ENCODE measurements at regions of chr1 and their contacts with region 1.

Region 1: GRCh38 chr1:21176586-21177555 is at the start of gene EIF4G3:
- DNase-seq: peak; percentile 99
- H3K4me3 ChIP-seq: peak within 1 kb of the TSS; percentile 66 to 96 (median 76)
- H3K27ac ChIP-seq: peak within 1 kb of the TSS; percentile 88 to 94 (median 94)
- H3K4me1 ChIP-seq: peaks cover 9 to 41% (median 28%) of the 10 kb centered on the region in 4 donors
- H3K27me3 ChIP-seq: no peaks in the 10 kb centered on the region
- CTCF ChIP-seq: no peak
- EP300 ChIP-seq: no peak
- POLR2A ChIP-seq: peak; percentile 54
- total RNA-seq, gene EIF4G3: 43.7 to 64.0 (median 62.2) TPM

Region 2: DNA sequence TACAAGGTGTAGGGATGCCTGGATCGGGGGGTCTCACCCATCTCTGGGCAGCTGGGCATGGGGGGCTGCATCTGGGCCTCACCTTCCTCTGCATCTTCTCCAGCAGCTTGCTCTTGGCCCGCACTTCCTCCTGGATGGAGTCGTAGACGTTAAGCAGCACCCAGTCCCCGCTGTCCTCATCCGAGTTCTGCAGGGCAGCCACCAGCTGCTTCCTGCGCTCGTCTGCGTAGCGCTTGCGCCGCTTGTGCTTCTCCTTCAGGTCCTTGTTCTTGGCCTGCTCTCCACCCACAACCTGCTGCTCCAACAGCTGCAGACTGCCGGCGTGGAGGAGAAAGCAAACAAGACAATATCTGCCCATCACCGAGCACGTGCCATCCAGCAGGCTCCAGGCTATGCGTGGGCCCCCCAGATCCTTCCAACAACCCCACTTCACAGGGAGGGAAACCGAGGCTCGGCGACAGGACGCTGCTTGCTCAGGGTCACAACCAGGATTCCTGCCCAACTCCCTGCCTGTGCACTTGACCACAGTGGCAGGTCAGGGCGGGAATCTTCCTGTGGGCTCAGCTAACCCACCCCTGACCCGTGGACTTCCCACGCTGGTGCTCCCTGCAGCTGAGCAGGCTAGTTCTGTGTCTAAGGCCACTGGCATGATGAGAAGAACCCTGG is 494.2 kb before region 1 on chr1:
- intact Hi-C with region 1: no loop called
- DNase-seq: no peak
- H3K4me3 ChIP-seq: no peak overlapping the region
- H3K27ac ChIP-seq: no peak overlapping the region
- H3K4me1 ChIP-seq: peaks cover 0 to 18% (median 11%) of the 10 kb centered on the region in 4 donors
- H3K27me3 ChIP-seq: no peaks in the 10 kb centered on the region
- CTCF ChIP-seq: no peak
- EP300 ChIP-seq: no peak
- POLR2A ChIP-seq: no peak

Region 3: DNA sequence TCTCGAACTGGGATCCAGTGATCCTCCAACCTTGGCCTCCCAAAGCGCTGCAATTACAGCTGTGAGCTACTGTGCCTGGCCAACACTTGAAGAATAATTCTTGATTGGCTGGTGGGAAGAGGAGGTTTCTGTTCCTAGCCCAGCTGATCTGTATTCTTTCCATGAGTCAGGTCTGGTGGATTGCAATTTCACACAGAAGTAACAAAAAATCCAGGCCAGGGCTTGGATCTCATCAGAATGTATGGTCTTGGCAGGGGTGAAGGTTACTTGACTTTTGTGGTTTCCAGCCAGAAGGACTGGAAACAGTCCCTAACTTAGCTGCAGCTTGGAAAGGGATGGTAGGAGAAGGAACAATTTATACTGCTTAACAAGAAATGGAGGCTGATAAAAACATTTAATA is 384.7 kb before region 1 on chr1:
- intact Hi-C with region 1: no loop called
- DNase-seq: no peak
- H3K4me3 ChIP-seq: no peak overlapping the region
- H3K27ac ChIP-seq: no peak overlapping the region
- H3K4me1 ChIP-seq: peaks cover 0 to 9% (median 8%) of the 10 kb centered on the region in 4 donors
- H3K27me3 ChIP-seq: no peaks in the 10 kb centered on the region
- CTCF ChIP-seq: no peak
- EP300 ChIP-seq: no peak
- POLR2A ChIP-seq: no peak

Region 4: GRCh38 chr1:21022279-21023040 is 154.4 kb before region 1 on chr1:
- intact Hi-C with region 1: loop called (anchors 10 kb)
- DNase-seq: no peak
- H3K4me3 ChIP-seq: peak overlapping the region; percentile 1 to 37 (median 32)
- H3K27ac ChIP-seq: peak overlapping the region; percentile 84 to 86 (median 86)
- H3K4me1 ChIP-seq: peaks cover 17 to 48% (median 30%) of the 10 kb centered on the region in 4 donors
- H3K27me3 ChIP-seq: no peaks in the 10 kb centered on the region
- CTCF ChIP-seq: no peak
- EP300 ChIP-seq: no peak
- POLR2A ChIP-seq: no peak